ENCODE measurements at regions of chr5 and their contacts with region 1.

Region 1: GRCh38 chr5:149636851-149637246 is 55.6 kb downstream of the ARHGEF37 start:
- DNase-seq: peak; percentile 75
- ATAC-seq: peak; percentile 57
- H3K4me3 ChIP-seq: no peak overlapping the region
- H3K4me3 Mint-ChIP-seq: no peak overlapping the region
- H3K27ac ChIP-seq: no peak overlapping the region
- H3K27ac Mint-ChIP-seq: no peak overlapping the region
- H3K4me1 ChIP-seq: no peaks in the 10 kb centered on the region
- H3K4me1 Mint-ChIP-seq: peaks cover 6% of the 10 kb centered on the region
- H3K27me3 ChIP-seq: no peaks in the 10 kb centered on the region
- H3K27me3 Mint-ChIP-seq: no peaks in the 10 kb centered on the region
- CTCF ChIP-seq: peak; percentile 94

Region 2: GRCh38 chr5:149847611-149848010 is 210.8 kb after region 1 on chr5:
- CTCF ChIA-PET with region 1: interaction called, 131 read pairs
- POLR2A ChIA-PET with region 1: no interaction called
- intact Hi-C with region 1: no loop called
- DNase-seq: no peak
- ATAC-seq: no peak
- H3K4me3 ChIP-seq: no peak overlapping the region
- H3K4me3 Mint-ChIP-seq: no peak overlapping the region
- H3K27ac ChIP-seq: no peak overlapping the region
- H3K27ac Mint-ChIP-seq: no peak overlapping the region
- H3K4me1 ChIP-seq: no peaks in the 10 kb centered on the region
- H3K4me1 Mint-ChIP-seq: no peaks in the 10 kb centered on the region
- H3K27me3 ChIP-seq: no peaks in the 10 kb centered on the region
- H3K27me3 Mint-ChIP-seq: no peaks in the 10 kb centered on the region
- CTCF ChIP-seq: no peak

Region 3: GRCh38 chr5:149990518-149991376 is 353.9 kb after region 1 on chr5:
- CTCF ChIA-PET with region 1: interaction called, 75 read pairs
- POLR2A ChIA-PET with region 1: no interaction called
- intact Hi-C with region 1: loop called (anchors 1 kb)
- DNase-seq: peak; percentile 77
- ATAC-seq: peak; percentile 97
- H3K4me3 ChIP-seq: no peak overlapping the region
- H3K4me3 Mint-ChIP-seq: no peak overlapping the region
- H3K27ac ChIP-seq: no peak overlapping the region
- H3K27ac Mint-ChIP-seq: no peak overlapping the region
- H3K4me1 ChIP-seq: no peaks in the 10 kb centered on the region
- H3K4me1 Mint-ChIP-seq: no peaks in the 10 kb centered on the region
- H3K27me3 ChIP-seq: no peaks in the 10 kb centered on the region
- H3K27me3 Mint-ChIP-seq: no peaks in the 10 kb centered on the region
- CTCF ChIP-seq: peak; percentile 97

Measured in B cell (primary cell).